Tibial artery (tissue), 4 donors: ENCODE measurements at regions of chr3 and their contacts with region 1.

Region 1: GRCh38 chr3:69084326-69085167 is at the start of gene ARL6IP5:
- DNase-seq: peak; percentile 94 to 97
- H3K4me3 ChIP-seq: peak within 1 kb of the TSS; percentile 95 to 97
- H3K27ac ChIP-seq: peak within 1 kb of the TSS; percentile 93 to 96
- H3K4me1 ChIP-seq: peaks cover 0 to 65% (median 50%) of the 10 kb centered on the region in 4 donors
- H3K27me3 ChIP-seq: no peaks in the 10 kb centered on the region
- CTCF ChIP-seq: no peak

Region 2: GRCh38 chr3:69013253-69014021 is 71.1 kb before region 1 on chr3 and contains the start of gene EOGT:
- intact Hi-C with region 1: loop called (anchors 10 kb)
- DNase-seq: peak; percentile 87 to 96
- H3K4me3 ChIP-seq: peak within 1 kb of the TSS; percentile 88 to 92
- H3K27ac ChIP-seq: peak within 1 kb of the TSS; percentile 99
- H3K4me1 ChIP-seq: peaks cover 0 to 59% (median 33%) of the 10 kb centered on the region in 4 donors
- H3K27me3 ChIP-seq: no peaks in the 10 kb centered on the region
- CTCF ChIP-seq: peak; percentile 54 to 63

Region 3: GRCh38 chr3:69051756-69052471 is 32.6 kb before region 1 on chr3 and contains the start of gene TMF1:
- intact Hi-C with region 1: loop called (anchors 5 kb)
- DNase-seq: peak; percentile 99
- H3K4me3 ChIP-seq: peak within 1 kb of the TSS; percentile 74 to 88
- H3K27ac ChIP-seq: peak within 1 kb of the TSS; percentile 94 to 96
- H3K4me1 ChIP-seq: peaks cover 0 to 46% (median 22%) of the 10 kb centered on the region in 4 donors
- H3K27me3 ChIP-seq: no peaks in the 10 kb centered on the region
- CTCF ChIP-seq: no peak

Region 4: GRCh38 chr3:69568458-69568857 is 483.9 kb after region 1 on chr3:
- intact Hi-C with region 1: no loop called
- DNase-seq: no peak
- H3K4me3 ChIP-seq: no peak overlapping the region
- H3K27ac ChIP-seq: no peak overlapping the region
- H3K4me1 ChIP-seq: no peaks in the 10 kb centered on the region
- H3K27me3 ChIP-seq: no peaks in the 10 kb centered on the region
- CTCF ChIP-seq: no peak